ENCODE measurements at regions of chr14 and their contacts with region 1.

Region 1: GRCh38 chr14:98138666-98139065 is 1133.3 kb downstream of the BCL11B start:
- DNase-seq: peak; percentile 75
- H3K4me3 ChIP-seq: no peak overlapping the region
- H3K27ac ChIP-seq: no peak overlapping the region
- H3K4me1 ChIP-seq: peaks cover 20% of the 10 kb centered on the region
- H3K27me3 ChIP-seq: no peaks in the 10 kb centered on the region
- CTCF ChIP-seq: peak; percentile 85

Region 2: DNA sequence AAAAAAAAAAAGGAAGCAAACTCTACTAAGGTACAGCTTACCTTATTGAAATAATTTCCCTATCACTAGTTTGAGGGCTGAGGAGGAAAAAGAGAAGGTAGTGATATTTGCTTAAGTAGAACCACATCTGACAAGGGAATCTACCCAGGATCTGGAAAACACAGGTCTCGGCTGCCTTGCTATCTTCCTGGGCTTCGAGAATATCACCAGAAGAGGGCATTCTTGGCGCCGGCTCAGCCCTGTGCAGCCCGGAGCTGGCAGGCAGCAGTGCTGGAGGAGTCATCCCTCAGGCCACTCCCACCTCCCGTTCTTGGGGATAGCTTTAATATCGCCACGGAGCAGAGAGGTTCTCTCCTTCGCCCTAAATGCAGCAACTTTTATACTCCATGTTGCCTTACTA is 160.3 kb before region 1 on chr14:
- CTCF ChIA-PET with region 1: no interaction called
- POLR2A ChIA-PET with region 1: no interaction called
- intact Hi-C with region 1: loop called (anchors 5 kb)
- DNase-seq: peak; percentile 92
- H3K4me3 ChIP-seq: peak overlapping the region; percentile 46
- H3K27ac ChIP-seq: peak overlapping the region; percentile 85
- H3K4me1 ChIP-seq: peaks cover 33% of the 10 kb centered on the region
- H3K27me3 ChIP-seq: no peaks in the 10 kb centered on the region
- CTCF ChIP-seq: peak; percentile 71

Region 3: DNA sequence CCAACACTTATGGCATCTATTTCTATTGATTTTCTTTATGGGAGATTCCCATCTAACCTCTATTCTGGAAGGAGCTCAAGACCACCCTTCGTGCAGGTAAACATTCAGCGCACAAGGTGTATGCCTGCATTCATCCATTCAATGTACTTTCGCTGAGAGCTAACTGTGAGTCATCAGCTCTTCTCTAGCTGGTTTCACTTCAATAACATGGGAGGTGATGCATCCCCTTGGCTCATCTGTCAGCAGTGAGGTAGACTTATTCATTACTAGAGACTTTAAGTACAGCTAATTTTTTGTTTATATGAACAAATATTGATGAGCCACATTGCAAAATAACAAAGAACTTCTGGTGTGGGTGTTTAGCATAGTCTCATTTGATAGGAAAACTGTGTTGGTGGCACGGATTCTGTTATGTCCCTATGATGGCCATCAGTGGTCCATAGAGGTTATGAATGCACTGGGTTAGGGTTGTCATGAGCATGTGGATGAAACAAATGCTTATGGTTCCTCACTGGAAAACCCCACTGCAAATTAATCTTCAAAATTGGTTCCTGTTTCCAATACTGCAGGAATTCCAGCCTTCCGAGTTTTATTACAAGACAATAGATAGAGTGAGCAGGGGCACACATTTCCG is 17.7 kb before region 1 on chr14:
- CTCF ChIA-PET with region 1: no interaction called
- POLR2A ChIA-PET with region 1: no interaction called
- intact Hi-C with region 1: no loop called
- DNase-seq: no peak
- H3K4me3 ChIP-seq: no peak overlapping the region
- H3K27ac ChIP-seq: no peak overlapping the region
- H3K4me1 ChIP-seq: no peaks in the 10 kb centered on the region
- H3K27me3 ChIP-seq: no peaks in the 10 kb centered on the region
- CTCF ChIP-seq: no peak

Region 4: DNA sequence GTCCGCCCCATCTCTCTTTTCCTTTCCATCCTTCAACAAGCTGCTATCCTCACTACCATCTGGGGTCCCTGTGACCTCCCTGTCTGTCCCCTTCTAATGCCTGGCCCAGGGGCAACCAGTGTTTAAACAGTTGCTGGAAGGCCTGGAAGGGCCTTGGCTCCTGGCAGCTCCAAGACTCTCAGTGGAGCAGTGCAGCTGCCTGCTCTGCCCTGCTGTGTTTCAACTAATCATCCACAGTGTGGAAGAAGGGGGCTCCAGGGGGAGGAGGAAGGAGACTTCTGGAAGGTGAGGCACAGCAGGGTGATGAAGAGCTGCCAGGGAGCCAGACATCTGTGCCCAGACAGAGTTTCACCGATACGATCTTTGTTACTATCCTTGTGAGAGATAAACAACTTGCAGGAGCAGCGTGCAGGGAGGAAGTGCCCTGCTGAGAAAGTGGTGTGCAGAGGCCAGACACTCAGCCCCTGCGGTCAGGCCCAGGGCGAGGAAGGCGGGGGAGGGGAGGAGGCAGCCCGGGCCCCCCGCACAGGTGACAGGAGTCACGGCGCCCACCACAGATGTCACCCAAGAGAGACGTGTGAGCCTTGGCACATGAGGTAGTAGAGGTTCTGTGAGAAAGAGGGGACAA is 71.5 kb after region 1 on chr14:
- CTCF ChIA-PET with region 1: no interaction called
- POLR2A ChIA-PET with region 1: no interaction called
- intact Hi-C with region 1: no loop called
- DNase-seq: peak; percentile 70
- H3K4me3 ChIP-seq: no peak overlapping the region
- H3K27ac ChIP-seq: no peak overlapping the region
- H3K4me1 ChIP-seq: peaks cover 6% of the 10 kb centered on the region
- H3K27me3 ChIP-seq: no peaks in the 10 kb centered on the region
- CTCF ChIP-seq: no peak

Region 5: DNA sequence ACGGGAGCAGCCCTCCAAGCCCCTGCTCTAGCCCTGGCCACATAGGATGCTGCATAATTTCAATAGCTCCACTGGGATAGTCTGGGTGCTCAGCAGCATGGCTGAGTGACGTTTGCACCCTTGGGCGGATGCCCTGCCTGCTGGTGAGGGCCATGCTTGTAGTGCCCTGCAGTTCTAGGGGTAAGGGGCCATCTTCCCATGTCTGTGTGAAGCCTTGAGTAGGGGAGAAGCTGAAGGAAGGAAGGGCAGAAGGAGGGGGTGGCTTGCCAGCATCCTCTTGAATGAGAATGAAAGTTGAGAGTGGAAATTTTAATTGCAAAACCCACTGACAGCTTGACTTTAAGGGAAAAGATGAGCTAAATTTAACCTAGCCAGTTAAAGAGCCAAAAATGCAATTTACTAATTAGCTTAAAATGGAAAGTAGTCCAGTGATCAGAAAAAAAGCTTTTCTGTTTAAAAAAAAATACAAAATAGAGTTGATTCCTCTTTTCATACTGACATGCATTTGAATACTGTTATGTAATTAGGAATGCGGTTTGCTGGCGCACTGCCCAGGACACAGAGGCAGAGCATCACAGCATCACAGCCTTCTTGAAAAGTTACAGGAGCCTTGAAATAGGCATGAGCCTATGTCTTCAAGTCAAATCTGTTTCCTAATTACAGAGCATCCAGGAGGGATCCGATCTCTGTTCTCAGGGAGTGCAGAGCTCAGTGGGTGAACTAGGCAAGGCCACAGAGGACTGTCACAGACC is 1636.1 kb after region 1 on chr14:
- CTCF ChIA-PET with region 1: no interaction called
- POLR2A ChIA-PET with region 1: no interaction called
- intact Hi-C with region 1: no loop called
- DNase-seq: peak; percentile 72
- H3K4me3 ChIP-seq: no peak overlapping the region
- H3K27ac ChIP-seq: no peak overlapping the region
- H3K4me1 ChIP-seq: peaks cover 13% of the 10 kb centered on the region
- H3K27me3 ChIP-seq: no peaks in the 10 kb centered on the region
- CTCF ChIP-seq: no peak

Measured in A673 (cell line).